GM12878 (cell line): ENCODE measurements at regions of chr6 and their contacts with region 1.

Region 1: DNA sequence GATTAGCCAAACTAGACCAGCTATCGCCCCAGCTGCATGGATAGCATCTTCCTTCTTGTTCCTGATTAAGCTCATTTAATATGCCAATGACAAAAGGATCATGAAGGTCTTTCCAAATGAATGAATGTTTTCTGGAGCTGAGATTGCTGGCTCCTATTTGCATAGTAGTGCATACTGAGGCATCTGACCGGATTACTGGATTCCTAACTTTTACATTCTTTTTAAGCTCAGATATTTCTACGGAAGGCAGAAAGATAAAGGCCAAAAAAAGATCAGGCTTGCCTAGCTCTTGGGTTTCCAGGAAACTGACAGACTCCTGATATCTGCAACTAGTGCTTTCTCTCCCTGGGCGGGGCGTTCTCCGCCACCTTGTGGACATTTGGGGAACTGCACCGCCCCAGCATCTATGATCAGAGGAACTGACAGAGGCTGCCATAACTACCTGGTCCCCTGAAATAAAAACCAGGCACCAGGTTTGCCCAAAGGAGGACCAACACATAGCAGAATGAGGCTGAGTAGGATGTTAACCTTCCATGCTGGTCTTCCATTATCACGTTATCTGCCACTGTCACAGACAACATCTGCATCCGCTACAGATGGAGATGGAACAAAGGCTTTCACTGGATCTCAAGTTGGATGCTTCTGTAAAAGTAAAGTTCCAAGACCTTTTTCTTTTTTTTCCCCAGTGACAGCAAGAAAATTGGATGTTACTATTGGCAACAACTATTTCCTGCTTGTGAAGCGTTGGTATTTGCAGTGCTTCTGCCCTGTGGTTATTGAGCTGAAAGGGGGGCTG is 33.2 kb downstream of the NT5E start:
- DNase-seq: no peak
- ATAC-seq: peak; percentile 98
- H3K4me3 ChIP-seq: no peak overlapping the region
- H3K27ac ChIP-seq: no peak overlapping the region
- H3K4me1 ChIP-seq: no peaks in the 10 kb centered on the region
- H3K27me3 ChIP-seq: no peaks in the 10 kb centered on the region
- CTCF ChIP-seq: peak; percentile 98 to 100 (median 99); a peak in 5 of 6 replicates
- EP300 ChIP-seq: no peak
- POLR2A ChIP-seq: no peak
- RAD21 ChIP-seq: peak; percentile 91

Region 2: GRCh38 chr6:85344996-85345395 is 138.1 kb before region 1 on chr6:
- CTCF ChIA-PET with region 1: interaction called, 13 read pairs
- POLR2A ChIA-PET with region 1: no interaction called
- RAD21 ChIA-PET with region 1: interaction called, 3 read pairs
- SMC1A ChIA-PET with region 1: interaction called, 3 read pairs
- in situ Hi-C with region 1: loop called (anchors 5 kb)
- intact Hi-C with region 1: no loop called
- DNase-seq: no peak
- ATAC-seq: no peak
- H3K4me3 ChIP-seq: no peak overlapping the region
- H3K27ac ChIP-seq: no peak overlapping the region
- H3K4me1 ChIP-seq: no peaks in the 10 kb centered on the region
- H3K27me3 ChIP-seq: no peaks in the 10 kb centered on the region
- CTCF ChIP-seq: no peak
- EP300 ChIP-seq: no peak
- POLR2A ChIP-seq: no peak
- RAD21 ChIP-seq: no peak

Region 3: DNA sequence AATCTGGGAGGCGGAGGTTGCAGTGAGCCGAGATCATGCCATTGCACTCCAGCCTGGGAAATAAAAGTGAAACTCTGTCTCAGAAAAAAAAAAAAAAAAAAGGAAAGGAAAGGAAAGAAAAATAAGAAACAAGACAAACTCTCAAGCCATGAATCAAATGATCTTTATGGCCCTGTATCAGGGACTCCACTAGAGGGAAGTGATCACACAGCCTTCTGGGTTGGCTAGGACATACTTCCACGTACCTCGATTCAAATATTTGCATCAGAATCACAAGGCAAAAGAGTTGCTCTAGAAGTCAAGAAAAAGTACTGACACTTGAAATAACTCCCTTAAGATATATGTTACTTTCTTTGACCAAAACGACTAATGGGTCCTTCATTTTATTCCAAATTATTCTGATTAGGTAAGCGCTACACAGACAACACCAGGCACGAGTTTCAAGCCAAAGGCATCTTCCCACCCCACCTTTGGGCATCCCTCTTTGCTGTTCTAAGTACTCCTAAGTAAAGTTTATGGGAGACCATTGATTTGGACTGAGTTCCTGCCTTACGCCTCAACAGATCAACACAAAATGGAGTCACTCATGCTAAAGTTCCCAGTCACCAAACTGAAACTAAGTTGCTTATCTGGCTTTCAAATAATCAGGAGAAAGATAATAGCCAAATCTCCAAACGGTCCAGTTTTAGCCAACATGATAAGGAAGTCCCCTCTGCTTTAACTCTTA is 110.8 kb before region 1 on chr6:
- CTCF ChIA-PET with region 1: interaction called, 62 read pairs
- POLR2A ChIA-PET with region 1: no interaction called
- RAD21 ChIA-PET with region 1: interaction called, 44 read pairs
- SMC1A ChIA-PET with region 1: interaction called, 34 read pairs
- in situ Hi-C with region 1: no loop called
- intact Hi-C with region 1: loop called (anchors 1 kb)
- DNase-seq: no peak
- ATAC-seq: peak; percentile 76
- H3K4me3 ChIP-seq: no peak overlapping the region
- H3K27ac ChIP-seq: no peak overlapping the region
- H3K4me1 ChIP-seq: no peaks in the 10 kb centered on the region
- H3K27me3 ChIP-seq: no peaks in the 10 kb centered on the region
- CTCF ChIP-seq: peak; percentile 19 to 45 (median 34); a peak in 4 of 6 replicates
- EP300 ChIP-seq: no peak
- POLR2A ChIP-seq: no peak
- RAD21 ChIP-seq: peak; percentile 63

Region 4: DNA sequence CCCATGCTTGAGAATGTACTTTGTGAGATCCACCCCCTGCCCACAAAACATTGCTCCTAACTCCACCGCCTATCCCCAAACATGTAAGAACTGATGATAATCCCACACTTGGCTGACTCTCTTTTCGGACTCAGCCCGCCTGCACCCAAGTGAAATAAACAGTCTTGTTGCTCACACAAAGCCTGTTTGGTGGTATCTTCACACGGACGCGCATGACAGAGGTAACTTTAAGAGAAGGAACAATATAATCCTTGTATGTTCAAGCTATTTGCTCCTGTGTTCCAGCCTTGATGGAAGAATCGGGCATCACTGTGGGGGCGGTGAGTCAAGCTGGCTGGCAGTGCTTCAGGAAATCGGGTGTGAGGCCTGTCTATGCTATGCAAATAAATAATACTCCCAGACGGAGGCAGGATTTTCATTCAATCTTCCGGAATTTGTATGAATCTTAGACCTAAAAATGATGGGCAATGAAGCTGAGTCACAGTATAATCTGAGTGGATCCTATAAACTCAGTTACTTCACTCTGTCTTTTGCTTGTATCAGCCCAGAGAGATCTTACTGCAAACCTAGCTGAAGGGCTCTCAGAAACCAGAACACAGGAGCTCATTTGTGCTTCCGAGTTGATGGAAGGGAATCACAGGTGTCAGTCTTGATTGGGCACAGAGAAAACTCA is 78.5 kb before region 1 on chr6:
- CTCF ChIA-PET with region 1: interaction called, 8 read pairs
- POLR2A ChIA-PET with region 1: no interaction called
- RAD21 ChIA-PET with region 1: interaction called, 20 read pairs
- SMC1A ChIA-PET with region 1: interaction called, 15 read pairs
- in situ Hi-C with region 1: no loop called
- intact Hi-C with region 1: no loop called
- DNase-seq: no peak
- ATAC-seq: peak; percentile 11; the same call in 2 of the 3 replicates
- H3K4me3 ChIP-seq: no peak overlapping the region
- H3K27ac ChIP-seq: no peak overlapping the region
- H3K4me1 ChIP-seq: peaks cover 20% of the 10 kb centered on the region
- H3K27me3 ChIP-seq: no peaks in the 10 kb centered on the region
- CTCF ChIP-seq: no peak
- EP300 ChIP-seq: no peak
- POLR2A ChIP-seq: no peak
- RAD21 ChIP-seq: no peak

Region 5: GRCh38 chr6:85460921-85461797 is 21.9 kb before region 1 on chr6:
- CTCF ChIA-PET with region 1: interaction called, 188 read pairs
- POLR2A ChIA-PET with region 1: interaction called, 3 read pairs
- RAD21 ChIA-PET with region 1: interaction called, 25 read pairs
- SMC1A ChIA-PET with region 1: interaction called, 120 read pairs
- in situ Hi-C with region 1: no loop called
- intact Hi-C with region 1: no loop called
- DNase-seq: peak; percentile 85
- ATAC-seq: peak; percentile 84
- H3K4me3 ChIP-seq: no peak overlapping the region; the same call in 1 of the 2 replicates
- H3K27ac ChIP-seq: peak overlapping the region; percentile 74
- H3K4me1 ChIP-seq: peaks cover 59% of the 10 kb centered on the region
- H3K27me3 ChIP-seq: no peaks in the 10 kb centered on the region
- CTCF ChIP-seq: no peak
- EP300 ChIP-seq: peak; percentile 89 to 92
- POLR2A ChIP-seq: no peak
- RAD21 ChIP-seq: peak; percentile 10; the same call in 1 of the 2 replicates

Region 6: GRCh38 chr6:85506441-85507093 is 23.5 kb after region 1 on chr6:
- CTCF ChIA-PET with region 1: interaction called, 13 read pairs
- POLR2A ChIA-PET with region 1: no interaction called
- RAD21 ChIA-PET with region 1: interaction called, 6 read pairs
- SMC1A ChIA-PET with region 1: interaction called, 3 read pairs
- in situ Hi-C with region 1: no loop called
- intact Hi-C with region 1: no loop called
- DNase-seq: no peak
- ATAC-seq: peak; percentile 56
- H3K4me3 ChIP-seq: no peak overlapping the region
- H3K27ac ChIP-seq: no peak overlapping the region
- H3K4me1 ChIP-seq: no peaks in the 10 kb centered on the region
- H3K27me3 ChIP-seq: no peaks in the 10 kb centered on the region
- CTCF ChIP-seq: no peak
- EP300 ChIP-seq: no peak
- POLR2A ChIP-seq: no peak
- RAD21 ChIP-seq: no peak